Endothelial cell of umbilical vein (primary cell): ENCODE measurements at regions of chr6 and their contacts with region 1.

Region 1: GRCh38 chr6:146700078-146700686 is 101.4 kb downstream of the ADGB start:
- DNase-seq: peak; percentile 78
- H3K4me3 ChIP-seq: no peak overlapping the region
- H3K27ac ChIP-seq: no peak overlapping the region
- H3K4me1 ChIP-seq: no peaks in the 10 kb centered on the region
- H3K27me3 ChIP-seq: peaks cover 0 to 3% of the 10 kb centered on the region in 2 experiments
- CTCF ChIP-seq: peak; percentile 44 to 52
- POLR2A ChIP-seq: no peak

Region 2: DNA sequence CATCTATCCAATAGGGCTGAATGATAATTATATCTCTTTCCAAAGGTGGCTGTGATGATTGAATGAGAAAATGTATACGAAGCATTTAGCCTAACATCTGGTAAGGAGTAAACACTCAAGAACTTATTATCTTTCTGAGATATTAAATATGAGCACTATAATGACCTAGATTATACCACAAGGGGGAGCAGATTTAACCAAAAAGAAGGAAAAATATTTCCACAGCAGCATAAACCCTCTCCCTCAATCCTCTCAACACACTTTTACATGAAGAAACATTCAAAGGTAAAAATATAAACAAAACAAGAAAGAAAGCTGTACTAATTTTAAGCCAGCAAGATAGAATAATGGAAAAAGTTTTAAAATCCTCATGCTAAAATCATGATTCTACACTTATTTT is 804.4 kb before region 1 on chr6:
- CTCF ChIA-PET with region 1: interaction called, 6 read pairs
- POLR2A ChIA-PET with region 1: no interaction called
- dilution Hi-C with region 1: no loop called
- intact Hi-C with region 1: loop called (anchors 1 kb)
- DNase-seq: peak; percentile 35
- H3K4me3 ChIP-seq: no peak overlapping the region
- H3K27ac ChIP-seq: no peak overlapping the region
- H3K4me1 ChIP-seq: peaks cover 9% of the 10 kb centered on the region
- H3K27me3 ChIP-seq: no peaks in the 10 kb centered on the region
- CTCF ChIP-seq: peak; percentile 11 to 15
- POLR2A ChIP-seq: no peak

Region 3: GRCh38 chr6:146041282-146041681 is 658.9 kb before region 1 on chr6:
- CTCF ChIA-PET with region 1: interaction called, 125 read pairs
- POLR2A ChIA-PET with region 1: no interaction called
- dilution Hi-C with region 1: no loop called
- intact Hi-C with region 1: loop called (anchors 1 kb)
- DNase-seq: peak; percentile 40
- H3K4me3 ChIP-seq: no peak overlapping the region
- H3K27ac ChIP-seq: no peak overlapping the region
- H3K4me1 ChIP-seq: no peaks in the 10 kb centered on the region
- H3K27me3 ChIP-seq: no peaks in the 10 kb centered on the region
- CTCF ChIP-seq: peak; percentile 24 to 46
- POLR2A ChIP-seq: no peak

Region 4: DNA sequence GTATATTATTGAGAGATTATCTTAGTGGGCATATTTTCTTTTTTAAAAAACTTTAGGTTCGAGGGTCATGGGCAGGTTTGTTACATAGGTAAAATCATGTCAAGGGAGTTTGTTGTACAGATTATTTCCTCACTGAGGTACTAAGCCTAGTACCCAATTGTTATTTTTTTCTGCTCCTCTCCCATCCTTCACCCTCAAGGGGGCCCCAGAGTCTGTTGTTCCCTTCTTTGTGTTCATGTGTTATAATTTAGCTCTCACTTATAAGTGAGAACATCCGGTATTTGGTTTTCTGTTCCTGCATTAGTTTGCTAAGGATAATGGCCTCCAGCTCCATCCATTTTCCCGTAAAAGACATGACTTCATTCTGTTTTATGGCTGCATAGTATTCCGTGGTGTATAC is 404.5 kb before region 1 on chr6:
- CTCF ChIA-PET with region 1: interaction called, 4 read pairs
- POLR2A ChIA-PET with region 1: no interaction called
- dilution Hi-C with region 1: no loop called
- intact Hi-C with region 1: loop called (anchors 1 kb)
- DNase-seq: no peak
- H3K4me3 ChIP-seq: no peak overlapping the region
- H3K27ac ChIP-seq: no peak overlapping the region
- H3K4me1 ChIP-seq: peaks cover 3% of the 10 kb centered on the region
- H3K27me3 ChIP-seq: no peaks in the 10 kb centered on the region
- CTCF ChIP-seq: no peak
- POLR2A ChIP-seq: no peak

Region 5: DNA sequence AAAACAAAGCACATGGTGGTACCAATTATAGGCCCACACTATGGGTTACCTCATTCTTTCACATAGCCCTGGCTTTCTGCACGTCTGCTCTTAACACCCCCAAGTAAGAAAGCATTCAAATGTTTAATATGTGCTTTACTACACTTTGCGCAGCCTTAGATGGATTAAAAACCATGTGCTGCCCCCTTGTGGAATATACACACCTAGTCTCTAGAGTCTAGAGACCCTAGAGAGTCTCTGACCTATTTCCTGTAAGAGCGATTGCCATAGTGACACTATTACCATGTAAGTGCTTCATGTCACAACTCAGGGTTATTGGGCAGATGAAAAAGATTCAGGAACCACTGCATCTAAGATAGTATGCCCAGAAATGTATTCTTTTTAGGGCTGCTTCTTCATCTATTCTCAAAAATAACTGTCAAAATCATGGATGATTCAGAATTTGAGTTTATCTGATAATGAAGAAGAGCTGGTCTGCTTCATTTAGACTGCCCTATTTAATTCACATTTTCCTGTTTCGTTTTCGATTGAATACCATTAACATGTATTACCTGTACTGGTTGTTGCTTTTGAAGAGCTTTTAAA is 84.9 kb after region 1 on chr6:
- CTCF ChIA-PET with region 1: no interaction called
- POLR2A ChIA-PET with region 1: no interaction called
- dilution Hi-C with region 1: no loop called
- intact Hi-C with region 1: loop called (anchors 2 kb)
- DNase-seq: peak; percentile 40
- H3K4me3 ChIP-seq: no peak overlapping the region
- H3K27ac ChIP-seq: no peak overlapping the region
- H3K4me1 ChIP-seq: no peaks in the 10 kb centered on the region
- H3K27me3 ChIP-seq: no peaks in the 10 kb centered on the region
- CTCF ChIP-seq: peak; percentile 42 to 48
- POLR2A ChIP-seq: no peak